ENCODE measurements at regions of chr22 and their contacts with region 1.

Region 1: GRCh38 chr22:30356449-30357235 is at the starts of genes CCDC157 and SF3A1:
- DNase-seq: peak; percentile 97

Region 2: DNA sequence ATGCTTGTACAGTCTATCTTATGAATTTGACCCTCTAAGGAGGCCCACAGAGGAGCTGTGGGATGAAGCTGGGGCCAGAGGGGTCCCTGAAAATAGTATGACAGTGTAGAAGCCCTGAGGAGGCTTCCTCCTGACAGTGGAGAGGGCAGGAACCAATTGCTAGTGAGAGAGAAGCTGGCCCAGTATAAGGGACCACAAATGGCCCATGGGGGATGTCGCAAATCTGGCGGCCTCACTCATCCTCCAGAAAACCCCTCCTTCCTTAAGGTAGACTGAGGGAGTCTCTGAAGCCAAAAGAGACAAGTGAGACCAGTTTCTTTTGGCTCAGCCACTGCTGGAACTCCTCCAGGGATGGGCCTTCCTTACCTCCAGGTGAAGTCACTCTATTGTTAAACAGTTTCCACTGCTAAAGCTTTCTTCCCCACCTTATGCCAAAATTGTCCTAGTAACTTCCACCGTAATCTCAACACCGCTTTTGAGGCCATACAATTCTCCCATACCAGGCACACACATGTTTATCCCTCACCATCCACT is 49.5 kb before region 1 on chr22:
- CTCF ChIA-PET with region 1: no interaction called
- POLR2A ChIA-PET with region 1: no interaction called
- DNase-seq: no peak

Region 3: DNA sequence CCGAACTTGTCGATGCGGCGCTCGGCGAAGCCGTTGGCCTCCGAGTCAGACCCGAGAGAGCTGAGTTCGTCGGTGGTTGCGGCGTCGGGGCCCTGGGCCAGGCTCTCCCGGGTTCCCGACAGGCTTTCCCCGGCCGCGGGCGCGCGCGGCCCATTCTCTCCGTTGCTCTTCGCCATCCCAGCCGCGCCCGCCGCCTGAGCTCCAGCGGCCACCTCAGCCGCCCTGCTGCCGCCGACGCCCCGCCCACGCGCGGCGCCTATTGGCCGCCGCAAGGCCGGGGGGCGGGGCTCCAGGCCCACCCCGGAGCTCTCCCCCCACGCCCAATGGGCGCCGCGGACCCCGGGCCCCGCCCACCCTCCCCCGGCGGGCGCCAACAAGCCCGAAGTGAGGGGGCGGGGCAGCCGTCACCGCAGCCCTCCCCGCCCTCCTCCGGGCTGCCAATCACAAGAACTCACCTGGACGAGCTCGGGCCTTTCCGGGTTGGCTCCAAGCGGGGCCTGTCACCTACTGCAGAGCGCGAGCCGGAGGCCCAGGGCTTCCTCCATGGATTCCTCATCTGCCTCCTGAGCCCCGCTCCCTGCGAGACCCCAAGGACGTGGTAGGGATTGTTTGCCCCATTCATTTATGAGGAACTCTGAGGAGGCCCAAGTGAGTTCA is 29.8 kb before region 1 on chr22 and contains the start of gene TBC1D10A:
- CTCF ChIA-PET with region 1: no interaction called
- POLR2A ChIA-PET with region 1: interaction called, 31 read pairs
- DNase-seq: peak; percentile 100

Region 4: DNA sequence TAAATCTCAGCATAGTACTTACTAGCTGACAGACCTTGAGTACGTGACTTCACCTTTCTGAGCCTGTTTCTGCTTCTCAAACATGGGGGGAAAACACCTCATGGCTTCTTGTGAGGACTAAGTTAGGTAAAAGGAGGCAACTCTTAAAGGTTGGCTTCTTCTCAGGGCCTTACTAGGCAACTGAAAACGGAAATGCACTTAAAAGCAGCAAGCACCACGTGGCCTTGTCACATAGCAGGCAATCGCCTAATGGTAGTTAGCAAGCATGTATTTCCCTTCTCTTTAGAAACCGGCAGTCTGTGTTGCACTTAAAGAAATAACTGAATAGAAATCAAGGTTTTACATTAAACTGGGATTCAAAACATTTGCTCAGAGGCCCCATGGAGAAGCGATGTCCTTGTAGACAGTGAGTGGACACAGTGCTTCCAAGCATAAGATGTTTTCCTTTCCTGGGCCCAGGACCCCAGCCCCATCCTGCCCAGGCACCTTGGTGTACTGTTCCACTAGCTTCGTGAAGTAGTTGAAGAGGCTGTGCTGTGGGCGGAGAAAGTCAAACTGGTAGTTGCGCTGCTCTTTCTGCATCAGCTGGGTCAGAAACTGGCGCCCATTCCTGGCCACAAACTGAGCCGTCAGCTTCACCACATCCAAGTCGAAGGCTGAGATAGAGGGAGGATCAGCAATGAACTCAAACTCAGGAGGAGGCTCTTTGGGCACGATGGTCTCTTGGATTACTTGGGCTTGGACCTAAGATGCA is 12.0 kb before region 1 on chr22:
- CTCF ChIA-PET with region 1: no interaction called
- POLR2A ChIA-PET with region 1: interaction called, 12 read pairs
- DNase-seq: no peak

Region 5: GRCh38 chr22:30373331-30374325 is 17.0 kb after region 1 on chr22:
- CTCF ChIA-PET with region 1: no interaction called
- POLR2A ChIA-PET with region 1: interaction called, 31 read pairs
- DNase-seq: no peak

Region 6: DNA sequence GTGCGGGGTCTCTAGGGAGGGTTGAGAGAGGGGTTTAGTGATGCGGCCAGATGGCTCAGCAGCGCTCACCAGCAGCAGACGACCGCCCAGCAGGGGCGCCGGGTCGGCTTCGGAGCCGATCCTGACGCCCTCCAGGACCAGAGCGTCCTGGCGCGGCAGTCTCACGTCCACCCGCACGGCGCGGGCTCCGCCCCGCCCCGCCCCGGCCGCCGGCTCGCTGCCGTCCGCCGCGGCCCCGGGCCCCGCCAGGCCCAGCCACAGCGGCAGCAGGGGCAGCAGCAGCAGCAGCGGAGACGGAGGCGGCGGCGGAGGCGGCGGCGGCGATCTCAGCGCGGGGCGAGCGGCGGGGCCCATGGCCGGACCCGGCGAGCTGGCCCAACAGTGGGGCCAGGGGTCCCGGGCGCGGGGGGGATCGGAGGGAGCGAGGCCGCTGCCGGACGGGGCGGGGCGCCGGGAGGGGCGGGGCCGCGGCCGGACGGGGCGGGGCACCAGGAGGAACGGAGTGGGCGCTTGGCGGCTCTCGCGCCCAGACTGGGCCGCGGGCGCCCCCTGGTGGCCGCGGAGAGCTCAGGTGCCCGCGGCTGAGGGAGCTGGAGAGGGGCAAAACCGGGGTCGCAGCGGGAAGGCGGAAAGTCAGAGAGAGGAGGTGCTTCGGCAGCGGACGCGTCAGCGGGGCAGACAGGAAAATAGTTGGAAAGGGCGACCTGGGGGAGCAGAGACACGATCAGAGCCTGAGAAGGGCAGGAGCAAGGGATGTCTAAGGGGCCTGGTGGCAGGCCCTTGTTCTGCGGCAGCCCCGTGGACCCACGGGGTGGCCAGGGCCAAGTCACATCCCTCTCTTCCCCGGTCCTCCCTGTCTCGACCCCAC is 30.6 kb after region 1 on chr22 and contains the start of gene RNF215:
- CTCF ChIA-PET with region 1: interaction called, 4 read pairs
- POLR2A ChIA-PET with region 1: interaction called, 11 read pairs
- DNase-seq: peak; percentile 99

Region 7: DNA sequence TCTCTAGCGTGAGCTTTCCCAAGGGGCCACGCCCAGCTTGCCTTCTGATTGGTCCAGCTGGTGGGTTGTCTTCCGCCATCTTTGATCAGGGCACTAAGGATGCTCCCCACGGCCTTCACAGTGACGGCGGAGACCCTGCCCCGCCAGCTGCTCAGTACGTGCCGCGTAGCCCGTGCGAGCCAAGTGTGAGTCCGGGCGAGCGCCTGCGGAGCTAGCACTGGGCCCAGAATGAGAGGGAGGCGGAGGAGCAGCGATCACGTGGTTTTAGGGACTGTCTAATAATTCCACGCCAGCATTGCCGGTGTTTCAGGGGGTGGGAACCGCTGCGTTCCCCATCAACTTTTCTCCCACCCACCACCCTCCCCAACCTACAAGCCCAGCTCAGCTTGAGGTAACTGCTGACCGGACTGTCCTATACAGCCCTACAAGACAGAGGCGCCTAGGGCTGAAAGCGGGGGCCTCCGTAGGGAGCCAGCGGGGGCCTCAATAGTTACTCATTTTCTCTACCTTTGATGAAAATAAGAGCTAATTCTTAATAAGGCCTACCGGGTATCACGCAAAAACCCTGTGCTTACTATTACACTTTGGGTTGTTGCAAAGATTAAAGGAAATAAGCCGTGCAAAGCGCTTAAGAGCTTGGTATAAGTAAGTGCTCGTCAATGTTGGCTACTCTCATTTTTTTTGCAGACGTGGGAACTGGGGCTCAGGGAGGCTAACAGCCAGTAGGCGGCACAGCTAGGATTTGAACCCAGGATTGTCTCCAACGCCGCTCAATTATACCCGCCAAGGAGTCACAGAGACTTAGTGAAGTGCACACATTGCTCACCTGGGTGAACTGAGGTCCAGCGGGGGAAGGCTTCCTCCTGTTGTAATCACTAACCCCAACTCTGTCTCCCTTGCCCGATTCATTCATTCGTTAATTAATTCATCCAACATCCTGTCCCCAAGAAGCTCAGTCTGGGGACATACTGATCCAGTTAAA is 67.6 kb after region 1 on chr22:
- CTCF ChIA-PET with region 1: interaction called, 3 read pairs
- POLR2A ChIA-PET with region 1: interaction called, 22 read pairs
- DNase-seq: peak; percentile 99